HEK293 (cell line): ENCODE measurements at regions of chr10 and their contacts with region 1.

Region 1: DNA sequence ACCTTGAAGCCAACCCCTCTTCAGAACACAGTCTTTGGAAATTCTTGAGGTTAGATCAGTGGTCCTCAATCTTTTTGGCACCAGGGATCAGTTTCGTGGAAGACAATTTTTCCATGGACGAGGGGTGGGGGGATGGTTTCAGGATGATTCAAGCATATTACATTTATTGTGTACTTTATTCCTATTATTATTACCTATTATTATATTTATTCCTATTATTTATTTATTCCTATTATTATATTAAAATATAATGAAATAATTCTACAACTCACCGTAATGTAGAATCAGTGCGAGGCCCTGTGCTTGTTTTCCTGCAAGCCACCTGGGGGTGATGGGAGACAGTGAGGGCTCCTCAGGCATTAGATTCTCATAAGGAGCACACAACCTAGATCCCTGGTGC is 17.9 kb downstream of the CAMK1D start:
- H3K4me3 ChIP-seq: no peak overlapping the region
- H3K27ac ChIP-seq: no peak overlapping the region
- H3K4me1 ChIP-seq: no peaks in the 10 kb centered on the region
- CTCF ChIP-seq: no peak

Region 2: GRCh38 chr10:12241810-12242529 is 125.3 kb before region 1 on chr10:
- CTCF ChIA-PET with region 1: no interaction called
- POLR2A ChIA-PET with region 1: no interaction called
- H3K4me3 ChIP-seq: no peak overlapping the region
- H3K27ac ChIP-seq: no peak overlapping the region
- H3K4me1 ChIP-seq: no peaks in the 10 kb centered on the region
- CTCF ChIP-seq: no peak

Region 3: DNA sequence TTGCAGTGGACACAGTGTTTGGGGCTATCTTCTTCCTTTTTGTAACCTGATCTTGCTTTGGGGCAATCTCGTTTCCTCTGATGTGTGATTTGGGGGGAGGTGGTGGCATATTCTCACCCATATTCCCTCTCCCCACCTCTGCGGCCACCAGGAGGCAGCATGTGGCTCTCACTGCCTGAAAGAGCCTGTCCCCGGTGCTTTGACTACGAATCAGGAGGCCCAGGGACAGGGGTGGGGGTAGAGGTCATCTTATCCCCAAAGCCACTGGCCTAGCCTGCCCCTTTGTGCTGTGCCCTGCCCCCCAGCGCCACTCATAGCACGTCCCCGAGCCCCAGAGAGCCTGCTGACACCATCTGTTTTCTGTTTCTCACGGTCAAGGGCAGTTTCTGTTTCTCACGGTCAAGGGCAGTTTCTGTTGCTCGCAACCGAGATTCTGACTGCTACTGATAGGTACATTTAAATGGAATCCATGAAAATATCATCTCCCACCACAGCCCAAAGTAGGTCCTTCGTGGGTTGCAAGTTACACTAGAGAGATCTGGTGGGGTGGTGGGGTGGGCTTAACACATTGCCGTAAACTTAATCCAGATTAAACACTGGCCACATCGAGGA is 904.4 kb after region 1 on chr10:
- CTCF ChIA-PET with region 1: interaction called, 10 read pairs
- POLR2A ChIA-PET with region 1: no interaction called
- H3K4me3 ChIP-seq: no peak overlapping the region
- H3K27ac ChIP-seq: no peak overlapping the region
- H3K4me1 ChIP-seq: no peaks in the 10 kb centered on the region
- CTCF ChIP-seq: no peak